ENCODE measurements at regions of chr3 and their contacts with region 1.

Region 1: DNA sequence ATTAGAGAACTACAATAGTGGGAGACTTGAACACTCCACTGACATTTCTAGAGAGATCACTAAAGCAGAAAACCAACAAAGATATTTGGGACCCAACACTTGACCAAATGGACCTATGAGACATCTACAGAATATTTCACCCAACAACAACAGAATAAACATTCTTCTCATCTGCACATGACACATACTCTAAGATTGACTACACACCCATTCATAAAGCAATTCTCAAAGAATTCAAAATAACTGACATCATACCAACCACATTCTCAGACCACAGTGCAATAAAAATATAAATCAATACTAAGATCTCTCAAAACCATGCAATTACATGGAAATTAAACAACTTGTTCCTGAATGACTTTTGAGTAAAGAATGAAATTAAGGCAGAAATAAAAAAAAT is 473.7 kb downstream of the LPP start:
- DNase-seq: no peak
- H3K4me3 ChIP-seq: no peak overlapping the region
- H3K27ac ChIP-seq: peak overlapping the region in 3 of 4 donors; percentile 11 to 47 (median 15)
- H3K4me1 ChIP-seq: peaks cover 7 to 27% (median 15%) of the 10 kb centered on the region in 4 donors
- H3K27me3 ChIP-seq: no peaks in the 10 kb centered on the region
- CTCF ChIP-seq: no peak
- EP300 ChIP-seq: no peak
- POLR2A ChIP-seq: no peak

Region 2: DNA sequence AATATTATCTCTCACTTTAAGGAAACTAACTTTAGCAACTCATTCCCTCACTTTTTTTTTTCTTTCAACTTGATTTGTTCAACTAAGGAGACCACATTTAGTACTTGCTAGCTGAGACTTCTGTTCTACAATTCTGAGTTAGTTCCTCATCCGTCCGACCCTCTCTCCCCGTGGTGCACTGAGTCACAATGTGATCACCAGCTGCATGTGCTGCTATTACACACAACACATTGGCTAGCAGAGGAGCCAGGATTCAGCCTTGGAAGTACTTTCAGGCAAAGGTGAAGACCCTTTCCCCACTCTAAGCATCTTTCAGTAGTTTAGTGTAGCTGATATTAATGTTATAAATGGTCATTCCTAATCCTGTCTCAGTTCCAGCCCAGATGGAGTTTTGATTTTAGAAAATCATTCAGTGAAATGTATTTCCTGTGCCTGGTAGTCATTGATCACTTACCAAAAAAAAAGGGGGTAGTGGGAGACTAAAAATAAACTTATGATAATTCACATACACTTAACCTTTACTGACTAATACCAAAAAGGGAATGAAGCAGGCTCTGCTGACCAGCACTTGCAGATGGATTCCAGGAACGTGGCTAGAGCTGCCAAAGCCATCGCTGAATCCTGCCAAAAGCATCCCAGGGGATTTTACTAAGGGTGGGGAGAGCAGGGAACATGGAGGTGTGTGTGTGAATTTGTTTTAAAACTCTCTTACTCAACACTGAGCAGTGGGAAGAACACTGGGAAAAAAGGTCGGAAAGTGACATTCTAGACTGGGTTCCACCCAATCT is 48.9 kb before region 1 on chr3:
- in situ Hi-C with region 1: no loop called
- intact Hi-C with region 1: loop called (anchors 1 kb)
- DNase-seq: peak; percentile 25
- H3K4me3 ChIP-seq: no peak overlapping the region
- H3K27ac ChIP-seq: peak overlapping the region; percentile 61 to 78 (median 70)
- H3K4me1 ChIP-seq: peaks cover 1 to 37% (median 28%) of the 10 kb centered on the region in 4 donors
- H3K27me3 ChIP-seq: no peaks in the 10 kb centered on the region
- CTCF ChIP-seq: no peak
- EP300 ChIP-seq: no peak
- POLR2A ChIP-seq: no peak

Region 3: DNA sequence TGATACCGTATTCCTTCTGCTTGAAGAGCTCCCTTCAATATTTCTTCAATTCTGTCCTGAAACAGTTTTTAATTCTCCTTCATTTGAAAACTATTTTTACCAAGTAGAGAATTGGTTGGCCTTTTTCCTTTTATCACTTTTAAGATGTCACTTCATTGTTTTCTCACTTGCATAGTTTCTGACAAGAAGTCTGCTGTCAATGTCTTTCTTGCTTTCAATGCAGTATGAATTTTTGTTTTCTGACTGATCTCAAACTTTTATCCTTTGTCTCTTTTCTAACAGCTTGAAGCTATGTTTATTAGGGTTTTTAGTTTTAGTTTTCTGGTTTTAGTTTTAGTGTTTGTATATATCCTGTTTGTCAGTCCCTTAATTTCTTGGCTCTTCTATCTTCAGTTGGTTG is 179.4 kb after region 1 on chr3:
- in situ Hi-C with region 1: no loop called
- intact Hi-C with region 1: no loop called
- DNase-seq: no peak
- H3K4me3 ChIP-seq: no peak overlapping the region
- H3K27ac ChIP-seq: no peak overlapping the region
- H3K4me1 ChIP-seq: peaks cover 0 to 11% (median 6%) of the 10 kb centered on the region in 4 donors
- H3K27me3 ChIP-seq: no peaks in the 10 kb centered on the region
- CTCF ChIP-seq: no peak
- EP300 ChIP-seq: no peak
- POLR2A ChIP-seq: no peak